MCF 10A (cell line): ENCODE measurements at regions of chr4 and their contacts with region 1.

Region 1: GRCh38 chr4:140523857-140524742 is at the start of gene ELMOD2:
- DNase-seq: peak; percentile 97
- H3K4me3 Mint-ChIP-seq: peak within 1 kb of the TSS; percentile 76
- H3K27ac Mint-ChIP-seq: peak within 1 kb of the TSS; percentile 47
- H3K4me1 Mint-ChIP-seq: no peaks in the 10 kb centered on the region
- H3K27me3 Mint-ChIP-seq: no peaks in the 10 kb centered on the region
- CTCF ChIP-seq: peak; percentile 84
- total RNA-seq, gene ELMOD2: 29.2 and 45.0 TPM in 2 replicates

Region 2: GRCh38 chr4:140367738-140368137 is 156.4 kb before region 1 on chr4:
- CTCF ChIA-PET with region 1: interaction called, 7 read pairs
- POLR2A ChIA-PET with region 1: interaction called, 52 read pairs
- intact Hi-C with region 1: loop called (anchors 2 kb)
- DNase-seq: peak; percentile 45
- H3K4me3 Mint-ChIP-seq: no peak overlapping the region
- H3K27ac Mint-ChIP-seq: no peak overlapping the region
- H3K4me1 Mint-ChIP-seq: no peaks in the 10 kb centered on the region
- H3K27me3 Mint-ChIP-seq: no peaks in the 10 kb centered on the region
- CTCF ChIP-seq: no peak

Region 3: GRCh38 chr4:140427106-140427961 is 96.8 kb before region 1 on chr4 and contains the start of gene CLGN:
- CTCF ChIA-PET with region 1: no interaction called
- POLR2A ChIA-PET with region 1: interaction called, 9 read pairs
- intact Hi-C with region 1: loop called (anchors 5 kb)
- DNase-seq: peak; percentile 65
- H3K4me3 Mint-ChIP-seq: peak within 1 kb of the TSS; percentile 85
- H3K27ac Mint-ChIP-seq: peak within 1 kb of the TSS; percentile 91
- H3K4me1 Mint-ChIP-seq: peaks cover 28% of the 10 kb centered on the region
- H3K27me3 Mint-ChIP-seq: no peaks in the 10 kb centered on the region
- CTCF ChIP-seq: peak; percentile 26
- total RNA-seq, gene CLGN: 10.7 and 37.6 TPM in 2 replicates

Region 4: DNA sequence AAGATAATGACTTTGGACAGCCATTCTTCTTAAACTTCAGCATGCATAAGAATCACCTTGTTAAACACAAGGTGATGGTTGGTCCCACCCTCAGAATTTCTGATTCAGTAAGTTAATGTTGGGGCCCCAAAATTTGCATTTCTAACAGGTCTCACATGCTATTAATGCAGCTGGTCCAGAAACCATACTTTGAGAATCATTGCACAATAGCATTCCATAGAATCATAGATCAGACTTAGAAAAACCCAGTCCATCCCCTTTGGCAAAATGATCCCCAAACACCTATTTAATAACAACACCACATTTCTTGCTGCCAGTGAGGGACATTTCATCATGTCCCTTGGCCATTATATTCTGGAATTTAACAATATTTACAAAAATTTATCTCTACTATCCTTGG is 19.8 kb before region 1 on chr4:
- CTCF ChIA-PET with region 1: no interaction called
- POLR2A ChIA-PET with region 1: no interaction called
- intact Hi-C with region 1: no loop called
- DNase-seq: no peak
- H3K4me3 Mint-ChIP-seq: no peak overlapping the region
- H3K27ac Mint-ChIP-seq: no peak overlapping the region
- H3K4me1 Mint-ChIP-seq: no peaks in the 10 kb centered on the region
- H3K27me3 Mint-ChIP-seq: peaks cover 11% of the 10 kb centered on the region
- CTCF ChIP-seq: no peak